HEK293T (cell line): ENCODE measurements at regions of chr11 and their contacts with region 1.

Region 1: DNA sequence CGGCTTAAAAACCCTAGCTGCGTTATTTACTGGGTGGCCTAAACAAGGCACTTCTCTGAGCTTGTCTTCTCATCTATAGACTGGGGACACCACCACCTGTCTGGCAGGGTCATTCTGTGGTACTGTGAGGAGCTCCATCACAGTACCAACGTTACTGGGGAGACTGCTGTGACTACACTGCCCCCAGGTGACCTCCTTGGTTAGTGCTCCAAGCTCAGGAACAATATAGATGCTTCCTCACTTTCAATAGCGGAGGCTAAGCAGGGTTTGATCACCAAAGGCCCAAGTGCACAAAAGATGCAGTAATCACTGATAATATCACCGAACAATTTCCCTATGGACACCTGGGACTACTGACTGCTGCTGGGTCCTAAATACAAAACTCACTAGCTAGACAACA is 18.8 kb downstream of the PRPF19 start:
- DNase-seq: peak; percentile 51

Region 2: GRCh38 chr11:60831143-60831500 is 56.4 kb before region 1 on chr11:
- CTCF ChIA-PET with region 1: interaction called, 31 read pairs
- POLR2A ChIA-PET with region 1: interaction called, 4 read pairs
- DNase-seq: peak; percentile 81

Region 3: GRCh38 chr11:60872961-60873524 is 14.5 kb before region 1 on chr11:
- CTCF ChIA-PET with region 1: no interaction called
- POLR2A ChIA-PET with region 1: no interaction called
- DNase-seq: no peak

Region 4: DNA sequence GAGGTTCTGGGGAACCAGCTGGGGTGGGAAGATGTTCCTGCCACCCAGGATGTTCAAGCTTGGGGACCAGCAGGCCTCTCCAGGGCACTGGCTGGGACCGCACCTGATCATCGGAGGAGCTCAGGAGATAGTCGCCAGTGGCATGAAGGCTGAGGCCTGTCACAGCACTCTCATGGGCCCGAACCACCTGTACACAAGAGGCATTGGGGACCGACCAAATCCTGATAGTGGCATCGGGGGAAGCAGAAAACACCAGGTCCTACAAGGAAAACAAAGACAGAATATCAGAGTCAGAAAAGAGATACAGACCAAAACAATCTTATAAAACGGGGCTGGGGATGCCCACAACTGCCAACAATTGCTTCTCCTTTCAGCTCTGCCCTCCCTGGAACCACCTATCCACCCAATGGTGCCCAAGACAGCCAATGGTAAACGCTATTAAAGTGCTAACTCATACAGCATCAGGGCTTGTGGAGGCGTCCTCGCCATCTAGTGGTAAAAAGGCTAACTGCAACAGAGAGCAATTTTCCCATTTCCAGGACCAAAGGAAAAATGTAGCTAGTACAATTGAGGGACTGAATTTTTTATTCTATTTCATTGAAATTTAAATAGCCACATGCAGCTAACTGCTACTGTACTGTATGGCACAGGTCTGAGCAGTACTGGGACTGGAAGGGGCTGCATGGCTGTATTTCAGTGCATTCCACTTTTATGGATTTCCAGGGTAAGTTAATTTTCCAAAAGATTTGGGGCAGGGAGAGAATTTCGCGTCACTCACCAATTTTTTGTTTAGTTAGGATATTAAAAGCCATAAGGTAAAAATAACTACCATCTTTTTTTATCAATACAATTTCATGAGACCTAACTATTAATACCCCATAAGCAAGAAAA is 11.7 kb after region 1 on chr11:
- CTCF ChIA-PET with region 1: interaction called, 12 read pairs
- POLR2A ChIA-PET with region 1: interaction called, 4 read pairs
- DNase-seq: peak; percentile 71